Ascending aorta (tissue), 2 donors: ENCODE measurements at regions of chr7 and their contacts with region 1.

Region 1: DNA sequence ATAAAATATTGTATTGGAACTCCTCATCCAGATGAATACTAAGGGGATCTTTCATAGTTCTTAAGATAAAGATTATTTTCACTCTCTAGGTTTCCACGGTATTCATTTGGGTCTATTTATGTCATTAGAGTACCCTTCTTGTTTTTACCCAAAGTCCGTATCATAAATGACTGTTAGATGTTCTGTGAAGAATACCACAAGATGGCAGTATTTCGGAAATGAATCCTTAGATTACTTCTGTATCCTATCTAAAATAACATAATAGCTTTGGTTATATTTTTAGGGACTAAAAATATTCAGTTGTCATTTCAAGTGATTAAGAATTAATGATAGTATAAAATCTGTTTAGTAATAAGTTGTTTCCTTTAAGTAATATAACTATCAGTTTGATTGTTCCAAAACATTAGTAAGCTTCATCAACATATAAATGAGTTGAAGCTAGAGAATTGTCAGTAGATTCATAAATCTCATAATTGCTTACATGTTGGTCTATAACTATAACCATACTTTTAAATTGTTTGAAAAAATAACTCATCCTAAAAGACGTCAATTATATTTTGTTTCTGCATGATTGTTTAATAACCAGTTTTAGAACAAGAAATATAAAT is 337.5 kb upstream of the KCND2 start:
- DNase-seq: no peak
- H3K4me3 ChIP-seq: no peak overlapping the region
- H3K27ac ChIP-seq: no peak overlapping the region
- H3K4me1 ChIP-seq: no peaks in the 10 kb centered on the region
- H3K27me3 ChIP-seq: no peaks in the 10 kb centered on the region
- CTCF ChIP-seq: peak in 2 of 3 experiments; percentile 33 to 44

Region 2: GRCh38 chr7:120272261-120272660 is 336.7 kb after region 1 on chr7:
- intact Hi-C with region 1: loop called (anchors 2 kb)
- DNase-seq: no peak
- H3K4me3 ChIP-seq: peak overlapping the region; percentile 47 to 59
- H3K27ac ChIP-seq: no peak overlapping the region
- H3K4me1 ChIP-seq: no peaks in the 10 kb centered on the region
- H3K27me3 ChIP-seq: no peaks in the 10 kb centered on the region
- CTCF ChIP-seq: peak; percentile 25 to 69 (median 45)